OCI-LY7 (cell line): ENCODE measurements at regions of chr4 and their contacts with region 1.

Region 1: DNA sequence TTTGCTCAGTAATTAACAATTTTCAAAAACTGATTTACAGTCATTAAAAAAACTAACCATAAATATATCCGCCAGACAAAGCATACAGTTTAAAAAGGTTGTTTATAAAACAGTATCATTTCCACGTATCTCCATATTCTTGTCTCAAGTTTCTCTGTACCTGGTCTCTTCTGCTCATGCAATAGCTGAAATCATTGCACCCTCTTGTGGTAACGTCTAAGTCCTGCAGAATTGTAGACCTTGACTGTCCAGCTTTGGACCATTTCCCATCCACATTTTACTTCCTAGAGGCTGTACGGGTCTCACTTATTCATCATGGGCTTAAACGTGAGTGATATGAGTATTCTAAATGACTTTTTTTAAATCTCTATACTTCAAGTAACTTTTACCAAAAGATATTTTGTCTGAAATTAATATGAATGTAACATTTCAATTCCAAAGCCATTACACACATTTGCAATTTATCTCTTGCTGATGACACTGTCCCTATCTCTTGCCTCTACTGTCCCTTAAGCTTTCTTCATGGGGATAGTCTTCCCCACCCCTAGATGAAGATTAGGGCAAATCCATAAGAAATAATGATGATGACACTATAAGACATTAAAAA is 118.5 kb downstream of the BTC start:
- DNase-seq: peak; percentile 40
- H3K4me3 ChIP-seq: no peak overlapping the region
- H3K27ac ChIP-seq: no peak overlapping the region
- H3K4me1 ChIP-seq: no peaks in the 10 kb centered on the region
- CTCF ChIP-seq: peak; percentile 81

Region 2: DNA sequence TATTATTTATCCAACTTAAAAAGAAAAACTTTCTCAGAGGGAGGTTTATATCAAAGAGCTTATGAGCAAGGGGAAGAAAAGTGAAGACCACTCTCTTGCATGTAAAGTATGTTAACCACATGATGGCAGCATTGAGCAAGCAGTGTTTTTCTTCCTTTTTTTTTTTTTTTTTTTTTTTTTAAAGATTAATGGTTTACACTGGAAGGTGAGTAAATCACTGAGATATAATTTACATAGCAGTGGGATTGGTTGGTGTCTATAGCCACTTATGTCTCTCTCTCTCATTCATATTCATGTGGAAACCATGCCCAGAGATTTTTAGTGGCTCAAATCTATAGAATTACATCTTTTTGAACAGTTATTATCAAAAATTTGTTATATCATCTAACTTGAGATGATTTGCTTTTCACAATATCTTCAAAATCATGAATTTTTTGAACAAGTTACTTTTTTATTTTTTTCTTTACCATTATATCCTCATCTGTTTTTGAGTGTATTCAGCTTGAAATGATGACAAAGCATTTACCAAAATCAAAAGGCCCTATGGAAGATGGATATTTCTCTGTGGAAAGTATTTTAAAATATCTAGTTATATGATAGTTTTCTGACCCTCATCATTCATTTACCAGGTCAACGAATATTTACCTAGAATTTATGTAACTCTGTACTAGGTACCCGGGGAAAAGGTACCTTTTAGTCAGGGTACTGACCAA is 486.3 kb before region 1 on chr4:
- CTCF ChIA-PET with region 1: no interaction called
- POLR2A ChIA-PET with region 1: no interaction called
- intact Hi-C with region 1: loop called (anchors 10 kb)
- DNase-seq: peak; percentile 70
- H3K4me3 ChIP-seq: no peak overlapping the region
- H3K27ac ChIP-seq: no peak overlapping the region
- H3K4me1 ChIP-seq: no peaks in the 10 kb centered on the region
- CTCF ChIP-seq: peak; percentile 92

Region 3: GRCh38 chr4:74320559-74321118 is 355.1 kb before region 1 on chr4:
- CTCF ChIA-PET with region 1: no interaction called
- POLR2A ChIA-PET with region 1: no interaction called
- intact Hi-C with region 1: loop called (anchors 5 kb)
- DNase-seq: peak; percentile 45
- H3K4me3 ChIP-seq: no peak overlapping the region
- H3K27ac ChIP-seq: no peak overlapping the region
- H3K4me1 ChIP-seq: no peaks in the 10 kb centered on the region
- CTCF ChIP-seq: peak; percentile 71

Region 4: DNA sequence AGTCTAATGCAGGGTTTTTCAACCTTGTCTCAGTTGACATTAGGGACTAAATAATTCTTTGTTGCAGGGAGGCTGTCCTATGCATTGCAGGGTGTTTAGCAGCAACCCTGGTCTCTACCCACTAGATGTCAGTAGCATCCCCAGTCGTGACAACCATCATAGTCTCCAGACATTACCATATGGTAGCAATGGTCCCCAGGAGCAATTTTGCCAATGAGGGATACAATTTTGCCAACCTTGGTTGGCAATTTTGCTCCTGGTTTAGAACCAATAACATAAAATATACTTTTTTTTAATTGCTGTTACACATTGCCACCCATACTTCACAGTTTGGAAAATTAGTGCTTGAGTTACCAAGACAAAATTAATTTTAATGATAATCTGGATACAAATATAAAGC is 304.9 kb before region 1 on chr4:
- CTCF ChIA-PET with region 1: no interaction called
- POLR2A ChIA-PET with region 1: no interaction called
- intact Hi-C with region 1: loop called (anchors 2 kb)
- DNase-seq: peak; percentile 30
- H3K4me3 ChIP-seq: no peak overlapping the region
- H3K27ac ChIP-seq: no peak overlapping the region
- H3K4me1 ChIP-seq: no peaks in the 10 kb centered on the region
- CTCF ChIP-seq: peak; percentile 78

Region 5: DNA sequence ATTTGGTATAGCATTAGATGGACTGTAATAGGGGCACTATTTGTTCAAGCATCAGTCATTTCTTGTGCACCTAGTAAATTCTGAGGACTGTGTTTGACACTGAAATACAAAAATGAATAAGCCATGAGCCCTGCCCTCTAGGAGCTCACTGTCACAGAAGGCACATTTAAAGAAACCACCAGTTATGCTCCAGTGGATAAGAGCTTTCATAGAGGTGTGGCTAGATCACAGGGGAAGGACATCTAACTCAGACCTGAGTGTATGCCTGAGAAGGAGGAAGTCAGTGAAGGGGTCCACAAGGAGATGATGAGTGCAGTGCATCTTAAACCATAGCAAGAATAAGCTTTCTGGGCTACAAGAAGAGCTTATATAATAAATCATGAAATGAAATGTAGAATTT is 78.4 kb after region 1 on chr4:
- CTCF ChIA-PET with region 1: no interaction called
- POLR2A ChIA-PET with region 1: no interaction called
- intact Hi-C with region 1: no loop called
- DNase-seq: no peak
- H3K4me3 ChIP-seq: no peak overlapping the region
- H3K27ac ChIP-seq: no peak overlapping the region
- H3K4me1 ChIP-seq: no peaks in the 10 kb centered on the region
- CTCF ChIP-seq: no peak